Activated CD4-positive, alpha-beta memory T cell treated with anti-CD3 and anti-CD28 coated beads for 36 hours (primary cell): ENCODE measurements at regions of chr17 and their contacts with region 1.

Region 1: GRCh38 chr17:30116661-30117551 is at the start of gene NSRP1:
- DNase-seq: peak; percentile 97
- H3K4me3 Mint-ChIP-seq: peak within 1 kb of the TSS; percentile 96
- H3K27ac Mint-ChIP-seq: peak within 1 kb of the TSS; percentile 99
- H3K4me1 Mint-ChIP-seq: peaks cover 41% of the 10 kb centered on the region
- H3K27me3 Mint-ChIP-seq: no peaks in the 10 kb centered on the region
- total RNA-seq, gene NSRP1: 24.3 to 26.5 TPM

Region 2: GRCh38 chr17:30084788-30085187 is 32.1 kb before region 1 on chr17:
- CTCF ChIA-PET with region 1: no interaction called
- POLR2A ChIA-PET with region 1: no interaction called
- intact Hi-C with region 1: no loop called
- DNase-seq: no peak
- H3K4me3 Mint-ChIP-seq: no peak overlapping the region
- H3K27ac Mint-ChIP-seq: no peak overlapping the region
- H3K4me1 Mint-ChIP-seq: no peaks in the 10 kb centered on the region
- H3K27me3 Mint-ChIP-seq: peaks cover 11% of the 10 kb centered on the region

Region 3: GRCh38 chr17:30222721-30223175 is 105.8 kb after region 1 on chr17:
- CTCF ChIA-PET with region 1: no interaction called
- POLR2A ChIA-PET with region 1: no interaction called
- intact Hi-C with region 1: no loop called
- DNase-seq: no peak
- H3K4me3 Mint-ChIP-seq: no peak overlapping the region
- H3K27ac Mint-ChIP-seq: no peak overlapping the region
- H3K4me1 Mint-ChIP-seq: no peaks in the 10 kb centered on the region
- H3K27me3 Mint-ChIP-seq: no peaks in the 10 kb centered on the region

Region 4: DNA sequence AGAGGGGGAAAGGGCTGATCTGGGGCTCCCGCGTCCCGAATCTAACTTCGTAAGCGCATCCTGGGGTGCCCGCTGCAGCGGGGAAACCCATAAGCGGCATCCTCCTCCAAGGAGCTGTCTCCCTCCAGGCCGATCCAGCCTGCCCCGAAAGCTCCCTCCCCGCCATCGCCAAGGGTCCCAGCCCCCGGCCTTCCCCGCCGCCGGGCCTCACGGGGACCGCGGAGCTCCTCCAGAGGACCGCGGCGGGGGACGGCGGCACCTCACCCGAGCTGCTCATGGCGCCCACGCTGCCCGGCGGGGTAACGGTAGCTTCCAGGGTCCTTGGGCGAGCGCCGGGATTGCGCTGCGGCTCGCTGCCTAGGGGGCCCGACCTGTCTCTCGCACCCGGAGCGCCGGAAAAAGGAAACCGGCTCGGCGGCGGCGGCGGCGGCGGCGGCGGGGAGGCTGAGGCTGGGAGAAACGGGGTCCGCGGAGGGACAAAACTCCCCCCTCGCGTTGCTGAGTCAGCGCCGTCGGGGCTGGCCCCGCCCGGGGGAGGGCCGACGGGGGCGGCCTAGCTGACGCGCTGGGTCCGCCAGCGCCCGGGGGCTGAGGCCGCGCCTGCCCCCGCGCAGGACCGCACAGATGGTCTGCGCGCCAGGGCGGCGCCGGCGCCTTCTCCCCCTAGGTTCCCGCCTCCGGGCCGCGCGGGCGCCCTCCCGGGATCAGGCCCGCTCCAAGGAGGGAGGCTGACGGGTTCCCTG is 174.8 kb after region 1 on chr17 and contains the start of gene BLMH:
- CTCF ChIA-PET with region 1: no interaction called
- POLR2A ChIA-PET with region 1: interaction called, 6 read pairs
- intact Hi-C with region 1: loop called (anchors 5 kb)
- DNase-seq: peak; percentile 90
- H3K4me3 Mint-ChIP-seq: peak within 1 kb of the TSS; percentile 92
- H3K27ac Mint-ChIP-seq: peak within 1 kb of the TSS; percentile 87
- H3K4me1 Mint-ChIP-seq: peaks cover 14% of the 10 kb centered on the region
- H3K27me3 Mint-ChIP-seq: no peaks in the 10 kb centered on the region
- total RNA-seq, gene BLMH: 47.0 to 49.6 TPM